ENCODE measurements at regions of chr7 and their contacts with region 1.

Region 1: GRCh38 chr7:152463709-152464311 is 28.0 kb upstream of the KMT2C start:
- DNase-seq: peak; percentile 100
- H3K4me3 ChIP-seq: peak overlapping the region; percentile 70 to 72
- H3K4me3 Mint-ChIP-seq: peak overlapping the region; percentile 36 to 95 (median 92)
- H3K27ac ChIP-seq: peak overlapping the region; percentile 98
- H3K27ac Mint-ChIP-seq: peak overlapping the region in 6 of 7 donors; percentile 17 to 94 (median 80)
- H3K4me1 ChIP-seq: peaks cover 8% of the 10 kb centered on the region
- H3K4me1 Mint-ChIP-seq: peaks cover 6 to 16% (median 11%) of the 10 kb centered on the region in 4 donors
- H3K27me3 ChIP-seq: no peaks in the 10 kb centered on the region
- H3K27me3 Mint-ChIP-seq: no peaks in the 10 kb centered on the region

Region 2: GRCh38 chr7:152025077-152025936 is 438.5 kb before region 1 on chr7 and contains the start of gene GALNT11:
- CTCF ChIA-PET with region 1: no interaction called
- POLR2A ChIA-PET with region 1: no interaction called
- intact Hi-C with region 1: loop called (anchors 2 kb)
- DNase-seq: peak; percentile 80 to 93 (median 91)
- H3K4me3 ChIP-seq: peak within 1 kb of the TSS; percentile 76 to 85
- H3K4me3 Mint-ChIP-seq: peak within 1 kb of the TSS; percentile 86 to 95 (median 90)
- H3K27ac ChIP-seq: peak within 1 kb of the TSS; percentile 79
- H3K27ac Mint-ChIP-seq: peak within 1 kb of the TSS; percentile 92 to 99 (median 96)
- H3K4me1 ChIP-seq: peaks cover 26% of the 10 kb centered on the region
- H3K4me1 Mint-ChIP-seq: peaks cover 20 to 45% (median 34%) of the 10 kb centered on the region in 4 donors
- H3K27me3 ChIP-seq: no peaks in the 10 kb centered on the region
- H3K27me3 Mint-ChIP-seq: no peaks in the 10 kb centered on the region
- total RNA-seq, gene GALNT11: 19.1 to 23.6 TPM

Region 3: GRCh38 chr7:152336754-152337368 is 126.9 kb before region 1 on chr7:
- CTCF ChIA-PET with region 1: interaction called, 5 read pairs
- POLR2A ChIA-PET with region 1: interaction called, 13 read pairs
- intact Hi-C with region 1: loop called (anchors 1 kb)
- DNase-seq: peak; percentile 30 to 45 (median 38)
- H3K4me3 ChIP-seq: no peak overlapping the region
- H3K4me3 Mint-ChIP-seq: peak overlapping the region; percentile 17 to 89 (median 80)
- H3K27ac ChIP-seq: peak overlapping the region; percentile 19
- H3K27ac Mint-ChIP-seq: peak overlapping the region; percentile 71 to 91 (median 77)
- H3K4me1 ChIP-seq: peaks cover 35% of the 10 kb centered on the region
- H3K4me1 Mint-ChIP-seq: peaks cover 37 to 61% (median 49%) of the 10 kb centered on the region in 4 donors
- H3K27me3 ChIP-seq: no peaks in the 10 kb centered on the region
- H3K27me3 Mint-ChIP-seq: no peaks in the 10 kb centered on the region

Region 4: GRCh38 chr7:152424348-152425108 is 39.3 kb before region 1 on chr7:
- CTCF ChIA-PET with region 1: no interaction called
- POLR2A ChIA-PET with region 1: interaction called, 3 read pairs
- intact Hi-C with region 1: loop called (anchors 5 kb)
- DNase-seq: no peak
- H3K4me3 ChIP-seq: no peak overlapping the region
- H3K4me3 Mint-ChIP-seq: peak overlapping the region in 4 of 8 donors; percentile 3 to 71 (median 37)
- H3K27ac ChIP-seq: no peak overlapping the region
- H3K27ac Mint-ChIP-seq: peak overlapping the region in 5 of 7 donors; percentile 6 to 81 (median 36)
- H3K4me1 ChIP-seq: peaks cover 58% of the 10 kb centered on the region
- H3K4me1 Mint-ChIP-seq: peaks cover 48 to 77% (median 65%) of the 10 kb centered on the region in 4 donors
- H3K27me3 ChIP-seq: no peaks in the 10 kb centered on the region
- H3K27me3 Mint-ChIP-seq: no peaks in the 10 kb centered on the region

Region 5: DNA sequence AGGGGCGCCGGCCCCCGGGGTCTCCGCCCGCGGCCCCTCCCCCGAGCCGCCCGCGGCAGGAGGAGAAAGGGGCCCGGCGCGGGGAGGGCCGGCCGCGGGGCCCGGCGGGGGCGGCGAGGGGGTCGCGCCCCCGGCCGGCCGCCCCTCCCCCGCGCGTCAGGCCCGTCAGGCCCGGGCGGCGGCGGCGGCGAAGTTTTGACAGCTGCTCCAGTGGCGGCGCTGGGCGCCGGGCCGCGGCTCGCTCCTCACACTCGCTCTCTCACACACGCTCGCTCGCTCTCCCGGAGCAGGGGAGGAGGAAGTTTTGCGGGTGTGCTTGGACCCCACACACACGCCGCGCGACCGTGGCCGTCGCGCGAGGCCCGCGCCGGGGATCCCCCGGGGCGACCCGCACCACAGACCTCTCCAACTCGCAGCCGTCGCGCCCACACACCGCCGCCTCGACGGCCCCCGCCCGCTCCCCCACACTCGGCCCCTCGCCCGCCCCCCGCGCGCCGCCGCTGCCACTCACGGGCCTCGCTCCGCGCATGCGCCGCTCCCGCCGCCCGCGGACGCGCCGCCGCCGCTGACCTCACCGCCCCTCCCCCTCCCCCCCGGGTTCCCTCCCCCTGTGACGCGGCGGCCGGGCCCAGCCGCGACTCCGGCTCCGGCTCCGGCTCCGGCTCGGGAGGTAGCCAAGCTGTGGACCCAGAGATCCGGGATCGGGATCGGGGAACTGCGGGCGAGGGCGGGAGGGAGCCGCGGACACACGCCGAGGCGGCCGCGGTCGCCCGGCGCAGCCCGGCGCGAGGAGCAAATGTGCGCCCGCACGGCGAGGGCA is 27.5 kb before region 1 on chr7:
- CTCF ChIA-PET with region 1: no interaction called
- POLR2A ChIA-PET with region 1: interaction called, 49 read pairs
- intact Hi-C with region 1: loop called (anchors 1 kb)
- DNase-seq: peak; percentile 87 to 91 (median 89)
- H3K4me3 ChIP-seq: peak overlapping the region; percentile 17 to 70
- H3K4me3 Mint-ChIP-seq: peak overlapping the region; percentile 83 to 90 (median 86)
- H3K27ac ChIP-seq: peak overlapping the region; percentile 88
- H3K27ac Mint-ChIP-seq: peak overlapping the region; percentile 85 to 97 (median 96)
- H3K4me1 ChIP-seq: peaks cover 28% of the 10 kb centered on the region
- H3K4me1 Mint-ChIP-seq: peaks cover 11 to 32% (median 17%) of the 10 kb centered on the region in 4 donors
- H3K27me3 ChIP-seq: no peaks in the 10 kb centered on the region
- H3K27me3 Mint-ChIP-seq: no peaks in the 10 kb centered on the region

Region 6: DNA sequence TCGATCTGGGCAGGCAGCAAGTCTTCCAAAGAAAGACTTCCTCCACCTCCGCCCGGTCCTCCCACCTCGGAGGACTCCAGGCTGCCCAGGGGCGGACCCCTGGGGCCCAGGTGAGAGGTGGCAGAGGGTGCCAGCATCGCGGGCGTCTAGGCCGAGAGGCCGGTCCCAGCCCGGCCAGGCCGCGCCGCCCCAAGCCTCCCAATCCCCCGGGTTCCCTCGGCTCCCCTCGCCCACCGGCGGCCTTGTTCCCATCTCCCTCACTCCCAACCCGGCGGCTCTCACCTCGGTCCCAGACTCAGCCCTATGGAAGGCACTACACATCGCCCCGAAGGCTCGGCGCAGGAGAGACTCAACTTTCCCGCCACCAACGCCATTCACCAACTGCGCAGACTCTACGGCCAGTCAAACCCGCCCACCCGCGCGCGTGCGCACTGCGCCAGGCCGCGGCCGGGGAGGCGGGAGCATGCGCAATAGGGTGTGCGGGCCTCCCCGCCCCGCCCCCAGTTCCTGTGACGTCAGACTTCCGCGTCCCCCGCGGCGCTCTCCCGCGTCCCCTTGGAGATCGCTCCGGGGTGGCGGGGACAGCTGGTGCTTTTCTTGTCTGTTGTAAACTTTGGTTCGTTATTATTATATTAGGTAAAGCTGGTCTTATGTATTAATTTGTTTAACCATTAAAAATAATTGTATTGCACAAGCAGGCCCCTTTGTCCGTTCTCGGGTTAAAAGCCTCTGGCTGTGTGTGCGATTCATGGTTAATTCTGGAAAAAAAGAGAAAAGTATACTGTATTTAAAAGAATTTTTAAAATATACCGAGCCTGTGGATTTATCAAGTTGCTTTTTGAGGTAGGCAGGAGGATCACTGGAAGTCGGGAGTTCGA is 212.2 kb after region 1 on chr7 and contains the start of gene XRCC2:
- CTCF ChIA-PET with region 1: interaction called, 3 read pairs
- POLR2A ChIA-PET with region 1: interaction called, 3 read pairs
- intact Hi-C with region 1: loop called (anchors 1 kb)
- DNase-seq: peak; percentile 87 to 99 (median 96)
- H3K4me3 ChIP-seq: peak within 1 kb of the TSS; percentile 52 to 62
- H3K4me3 Mint-ChIP-seq: peak within 1 kb of the TSS; percentile 89 to 96 (median 95)
- H3K27ac ChIP-seq: peak within 1 kb of the TSS; percentile 73
- H3K27ac Mint-ChIP-seq: peak within 1 kb of the TSS; percentile 69 to 98 (median 94)
- H3K4me1 ChIP-seq: peaks cover 14% of the 10 kb centered on the region
- H3K4me1 Mint-ChIP-seq: peaks cover 4 to 17% (median 11%) of the 10 kb centered on the region in 4 donors
- H3K27me3 ChIP-seq: no peaks in the 10 kb centered on the region
- H3K27me3 Mint-ChIP-seq: no peaks in the 10 kb centered on the region
- total RNA-seq, gene XRCC2: 0.75 to 1.1 TPM

Region 7: GRCh38 chr7:152759949-152760853 is 296.4 kb after region 1 on chr7:
- CTCF ChIA-PET with region 1: no interaction called
- POLR2A ChIA-PET with region 1: interaction called, 3 read pairs
- intact Hi-C with region 1: loop called (anchors 1 kb)
- DNase-seq: peak; percentile 12 to 48 (median 23)
- H3K4me3 ChIP-seq: peak overlapping the region; percentile 49 to 68
- H3K4me3 Mint-ChIP-seq: peak overlapping the region; percentile 86 to 96 (median 92)
- H3K27ac ChIP-seq: peak overlapping the region; percentile 81
- H3K27ac Mint-ChIP-seq: peak overlapping the region; percentile 58 to 93 (median 90)
- H3K4me1 ChIP-seq: peaks cover 14% of the 10 kb centered on the region
- H3K4me1 Mint-ChIP-seq: peaks cover 16 to 28% (median 20%) of the 10 kb centered on the region in 4 donors
- H3K27me3 ChIP-seq: no peaks in the 10 kb centered on the region
- H3K27me3 Mint-ChIP-seq: no peaks in the 10 kb centered on the region